ENCODE measurements at regions of chr11 and their contacts with region 1.

Region 1: GRCh38 chr11:59822989-59823566 is 12.5 kb upstream of the MRPL16 start:
- DNase-seq: peak; percentile 75
- H3K4me3 Mint-ChIP-seq: no peak overlapping the region
- H3K27ac Mint-ChIP-seq: no peak overlapping the region
- H3K4me1 Mint-ChIP-seq: peaks cover 5% of the 10 kb centered on the region
- H3K27me3 Mint-ChIP-seq: no peaks in the 10 kb centered on the region

Region 2: DNA sequence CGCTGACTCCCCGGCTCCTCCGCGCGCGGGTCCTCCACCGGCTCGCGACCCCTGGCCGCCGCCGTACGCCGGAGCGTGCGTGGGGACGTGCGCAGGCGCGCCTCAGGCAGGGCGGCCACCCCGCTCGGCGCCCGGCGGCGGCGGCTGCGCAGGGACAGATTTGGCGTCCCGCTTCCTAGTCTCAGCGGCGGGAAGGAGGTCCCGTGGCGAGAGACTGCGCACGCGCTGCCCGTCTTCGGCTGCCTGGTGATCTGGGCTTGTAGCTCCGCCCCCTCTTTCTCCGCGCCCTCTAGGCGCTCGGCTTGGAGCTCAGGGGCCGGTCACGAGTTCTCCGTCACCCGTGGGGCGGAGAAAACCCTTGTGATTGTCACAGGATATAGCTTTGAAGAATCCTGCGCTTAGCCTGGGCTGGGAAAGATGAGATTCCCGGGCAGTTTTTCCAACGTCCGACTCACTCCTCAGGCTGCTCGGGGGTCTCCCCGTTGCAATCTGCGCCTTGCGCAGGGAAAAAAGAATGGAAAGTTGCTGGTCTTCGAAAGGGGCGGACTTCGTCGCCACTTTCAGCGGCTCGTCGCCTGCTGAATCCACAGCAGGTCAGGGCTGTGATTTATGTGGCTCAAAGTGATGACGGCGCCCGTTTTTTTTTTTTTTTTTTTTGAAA is 154.0 kb before region 1 on chr11 and contains the start of gene PATL1:
- intact Hi-C with region 1: no loop called
- DNase-seq: peak; percentile 100
- H3K4me3 Mint-ChIP-seq: peak within 1 kb of the TSS; percentile 98
- H3K27ac Mint-ChIP-seq: peak within 1 kb of the TSS; percentile 97
- H3K4me1 Mint-ChIP-seq: peaks cover 40% of the 10 kb centered on the region
- H3K27me3 Mint-ChIP-seq: peaks cover 1% of the 10 kb centered on the region
- total RNA-seq, gene PATL1: 72.4 and 76.1 TPM in 2 replicates

Region 3: GRCh38 chr11:59891781-59892181 is 68.7 kb after region 1 on chr11:
- intact Hi-C with region 1: no loop called
- DNase-seq: no peak
- H3K4me3 Mint-ChIP-seq: no peak overlapping the region
- H3K27ac Mint-ChIP-seq: no peak overlapping the region
- H3K4me1 Mint-ChIP-seq: no peaks in the 10 kb centered on the region
- H3K27me3 Mint-ChIP-seq: peaks cover 2% of the 10 kb centered on the region

Region 4: DNA sequence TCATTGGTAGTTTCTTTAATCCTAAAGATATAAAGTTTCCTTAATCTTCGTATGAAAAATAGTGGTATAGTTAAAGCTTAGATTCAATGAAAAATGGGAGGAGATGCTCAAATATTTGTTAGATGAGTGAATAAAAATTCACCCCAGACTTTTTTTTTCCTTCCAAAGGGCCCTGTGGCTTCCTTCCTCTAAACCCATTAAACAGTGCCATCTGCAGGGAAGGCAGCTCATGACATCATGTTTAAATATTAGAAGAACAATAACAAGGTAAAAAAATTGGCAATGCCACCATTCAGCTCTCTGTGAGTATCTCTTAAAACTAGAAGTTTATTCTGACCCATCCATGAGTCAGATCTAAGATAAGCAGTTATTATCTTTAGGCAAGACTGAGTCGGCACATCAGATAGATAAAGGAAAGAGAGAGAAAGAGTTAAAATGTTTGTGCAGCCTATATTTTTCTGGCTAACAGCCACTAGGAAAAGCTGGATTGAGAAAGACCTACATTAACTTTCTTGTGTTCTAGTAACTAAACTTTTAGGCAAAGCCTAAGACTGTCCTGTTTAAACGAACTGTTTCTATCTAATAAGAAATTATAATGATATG is 96.0 kb after region 1 on chr11:
- intact Hi-C with region 1: loop called (anchors 1 kb)
- DNase-seq: peak; percentile 77
- H3K4me3 Mint-ChIP-seq: no peak overlapping the region
- H3K27ac Mint-ChIP-seq: no peak overlapping the region
- H3K4me1 Mint-ChIP-seq: no peaks in the 10 kb centered on the region
- H3K27me3 Mint-ChIP-seq: no peaks in the 10 kb centered on the region

Region 5: DNA sequence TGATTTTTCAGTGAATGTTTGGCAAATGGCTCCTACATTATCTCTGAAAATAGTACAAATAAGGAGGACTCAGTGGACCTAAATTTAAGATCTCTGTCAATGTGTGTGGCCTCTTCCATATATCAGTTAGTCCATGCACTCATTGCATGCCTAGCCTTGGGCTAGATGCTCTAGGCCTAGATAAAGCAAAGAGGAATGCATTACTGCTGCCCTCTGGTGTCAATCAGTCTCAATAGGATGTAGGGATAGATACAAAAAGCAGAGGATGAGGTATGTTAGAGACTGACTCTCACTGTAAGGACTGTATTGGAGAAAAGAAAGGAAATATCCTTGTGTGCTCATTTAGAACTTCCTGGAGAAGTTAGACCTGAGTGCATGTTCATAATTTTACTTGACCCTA is 307.4 kb after region 1 on chr11:
- intact Hi-C with region 1: loop called (anchors 10 kb)
- DNase-seq: no peak
- H3K4me3 Mint-ChIP-seq: no peak overlapping the region
- H3K27ac Mint-ChIP-seq: no peak overlapping the region
- H3K4me1 Mint-ChIP-seq: no peaks in the 10 kb centered on the region
- H3K27me3 Mint-ChIP-seq: no peaks in the 10 kb centered on the region

Region 6: GRCh38 chr11:60193687-60194433 is 370.8 kb after region 1 on chr11:
- intact Hi-C with region 1: loop called (anchors 2 kb)
- DNase-seq: peak; percentile 88
- H3K4me3 Mint-ChIP-seq: no peak overlapping the region
- H3K27ac Mint-ChIP-seq: no peak overlapping the region
- H3K4me1 Mint-ChIP-seq: peaks cover 7% of the 10 kb centered on the region
- H3K27me3 Mint-ChIP-seq: peaks cover 3% of the 10 kb centered on the region

Measured in activated CD4-positive, alpha-beta T cell treated with anti-CD3 and anti-CD28 coated beads, Interleukin-2, amount 10 ng/mL, durations not matched to agents 24 days and 14 days (primary cell).